Psoas muscle (tissue), 8 donors: ENCODE measurements at regions of chr6 and their contacts with region 1.

Region 1: DNA sequence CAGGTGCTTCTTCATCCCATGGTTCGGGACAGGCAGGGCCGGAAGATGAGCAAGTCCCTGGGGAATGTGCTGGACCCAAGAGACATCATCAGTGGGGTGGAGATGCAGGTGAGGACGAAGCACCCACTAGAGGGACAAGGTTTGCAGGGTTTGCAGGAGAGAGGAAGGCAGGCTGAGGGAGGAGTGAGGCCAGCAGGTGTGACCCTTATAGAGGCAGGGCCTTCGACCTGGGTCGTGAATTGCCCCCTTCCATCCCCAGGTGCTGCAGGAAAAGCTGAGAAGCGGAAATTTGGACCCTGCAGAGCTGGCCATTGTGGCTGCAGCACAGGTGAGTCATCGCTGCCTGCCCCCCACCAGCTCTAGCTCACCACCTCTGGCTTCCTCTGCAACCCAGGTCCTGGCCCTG is 8.4 kb downstream of the VARS2 start:
- DNase-seq: no peak
- ATAC-seq: no peak
- H3K4me3 ChIP-seq: no peak overlapping the region
- H3K27ac ChIP-seq: no peak overlapping the region
- H3K4me1 ChIP-seq: peaks cover 7% of the 10 kb centered on the region
- H3K27me3 ChIP-seq: no peaks in the 10 kb centered on the region
- CTCF ChIP-seq: no peak

Region 2: GRCh38 chr6:30955367-30956042 is 33.1 kb after region 1 on chr6:
- intact Hi-C with region 1: loop called in 1 of 2 experiments (anchors 1 kb)
- DNase-seq: peak; percentile 78 to 86
- ATAC-seq: peak; percentile 67 to 86 (median 83)
- H3K4me3 ChIP-seq: peak overlapping the region; percentile 59
- H3K27ac ChIP-seq: no peak overlapping the region
- H3K4me1 ChIP-seq: peaks cover 8% of the 10 kb centered on the region
- H3K27me3 ChIP-seq: peaks cover 0 to 48% (median 2%) of the 10 kb centered on the region in 3 donors
- CTCF ChIP-seq: no peak

Region 3: GRCh38 chr6:31060145-31060544 is 137.7 kb after region 1 on chr6:
- intact Hi-C with region 1: loop called in 1 of 2 experiments (anchors 5 kb)
- DNase-seq: no peak
- ATAC-seq: no peak
- H3K4me3 ChIP-seq: no peak overlapping the region
- H3K27ac ChIP-seq: no peak overlapping the region
- H3K4me1 ChIP-seq: no peaks in the 10 kb centered on the region
- H3K27me3 ChIP-seq: no peaks in the 10 kb centered on the region
- CTCF ChIP-seq: no peak

Region 4: DNA sequence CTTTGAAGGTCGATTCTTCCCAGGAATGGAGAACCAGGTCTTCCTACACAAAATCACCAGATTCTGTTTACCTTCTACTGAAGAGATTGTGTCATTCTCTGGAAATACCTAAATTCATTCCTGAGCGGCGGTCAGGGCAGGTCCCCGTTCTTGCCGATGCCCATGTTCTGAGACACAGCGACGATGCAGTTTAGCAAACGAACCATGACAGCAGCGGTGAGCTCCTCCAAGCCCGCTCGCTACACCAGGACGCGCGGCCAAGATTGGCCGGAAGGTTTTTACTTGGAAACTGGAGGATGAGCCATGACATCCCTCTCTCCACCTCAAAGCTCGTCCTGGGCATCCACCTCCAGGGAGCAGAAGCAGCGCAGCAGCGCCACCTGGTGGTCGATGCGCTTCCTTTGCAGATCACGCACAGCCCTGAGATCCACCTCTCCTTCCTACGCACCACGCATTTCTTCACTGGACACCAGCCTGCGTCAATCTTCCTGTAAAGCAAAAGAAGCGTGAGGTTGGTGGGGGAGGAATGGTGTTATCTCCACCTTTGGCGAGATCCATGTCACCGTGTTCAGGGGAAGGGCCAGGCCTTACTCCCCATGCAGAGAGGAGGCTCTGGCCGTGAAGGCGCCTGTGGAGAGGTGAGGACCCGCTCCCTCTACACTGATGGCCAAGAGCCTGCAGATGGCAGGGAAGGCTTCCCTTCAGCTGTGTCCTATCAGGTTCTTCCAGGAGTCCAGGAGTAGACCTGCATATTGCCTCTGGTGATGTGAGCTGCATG is 444.4 kb after region 1 on chr6:
- intact Hi-C with region 1: no loop called
- DNase-seq: peak; percentile 86 to 92
- ATAC-seq: peak; percentile 98 to 100 (median 99)
- H3K4me3 ChIP-seq: peak overlapping the region; percentile 36
- H3K27ac ChIP-seq: no peak overlapping the region
- H3K4me1 ChIP-seq: no peaks in the 10 kb centered on the region
- H3K27me3 ChIP-seq: peaks cover 0 to 16% (median 2%) of the 10 kb centered on the region in 3 donors
- CTCF ChIP-seq: peak; percentile 96